Activated naive CD4-positive, alpha-beta T cell treated with anti-CD3 and anti-CD28 coated beads, Interleukin-2, amount 10 ng/mL, durations not matched to agents 7 days and 5 days (primary cell): ENCODE measurements at regions of chr1 and their contacts with region 1.

Region 1: GRCh38 chr1:8848663-8849386 is 29.7 kb downstream of the ENO1 start:
- DNase-seq: peak; percentile 81
- H3K4me3 Mint-ChIP-seq: no peak overlapping the region
- H3K27ac Mint-ChIP-seq: no peak overlapping the region
- H3K4me1 Mint-ChIP-seq: peaks cover 9% of the 10 kb centered on the region
- H3K27me3 Mint-ChIP-seq: peaks cover 26% of the 10 kb centered on the region

Region 2: GRCh38 chr1:8560611-8561544 is 287.9 kb before region 1 on chr1:
- CTCF ChIA-PET with region 1: interaction called, 46 read pairs
- DNase-seq: peak; percentile 44
- H3K4me3 Mint-ChIP-seq: no peak overlapping the region
- H3K27ac Mint-ChIP-seq: no peak overlapping the region
- H3K4me1 Mint-ChIP-seq: peaks cover 26% of the 10 kb centered on the region
- H3K27me3 Mint-ChIP-seq: no peaks in the 10 kb centered on the region

Region 3: GRCh38 chr1:8727809-8728213 is 121.0 kb before region 1 on chr1:
- CTCF ChIA-PET with region 1: interaction called, 24 read pairs
- DNase-seq: no peak
- H3K4me3 Mint-ChIP-seq: no peak overlapping the region
- H3K27ac Mint-ChIP-seq: no peak overlapping the region
- H3K4me1 Mint-ChIP-seq: peaks cover 20% of the 10 kb centered on the region
- H3K27me3 Mint-ChIP-seq: no peaks in the 10 kb centered on the region

Region 4: GRCh38 chr1:8807004-8807403 is 41.8 kb before region 1 on chr1:
- CTCF ChIA-PET with region 1: interaction called, 10 read pairs
- DNase-seq: no peak
- H3K4me3 Mint-ChIP-seq: no peak overlapping the region
- H3K27ac Mint-ChIP-seq: no peak overlapping the region
- H3K4me1 Mint-ChIP-seq: no peaks in the 10 kb centered on the region
- H3K27me3 Mint-ChIP-seq: no peaks in the 10 kb centered on the region

Region 5: GRCh38 chr1:8858888-8859706 is 10.3 kb after region 1 on chr1:
- CTCF ChIA-PET with region 1: interaction called, 37 read pairs
- DNase-seq: peak; percentile 67
- H3K4me3 Mint-ChIP-seq: no peak overlapping the region
- H3K27ac Mint-ChIP-seq: peak overlapping the region; percentile 78
- H3K4me1 Mint-ChIP-seq: peaks cover 52% of the 10 kb centered on the region
- H3K27me3 Mint-ChIP-seq: no peaks in the 10 kb centered on the region

Region 6: GRCh38 chr1:8891401-8891800 is 42.6 kb after region 1 on chr1:
- CTCF ChIA-PET with region 1: no interaction called
- DNase-seq: no peak
- H3K4me3 Mint-ChIP-seq: no peak overlapping the region
- H3K27ac Mint-ChIP-seq: no peak overlapping the region
- H3K4me1 Mint-ChIP-seq: peaks cover 8% of the 10 kb centered on the region
- H3K27me3 Mint-ChIP-seq: no peaks in the 10 kb centered on the region

Region 7: GRCh38 chr1:8925406-8925805 is 76.6 kb after region 1 on chr1:
- CTCF ChIA-PET with region 1: no interaction called
- DNase-seq: no peak
- H3K4me3 Mint-ChIP-seq: no peak overlapping the region
- H3K27ac Mint-ChIP-seq: no peak overlapping the region
- H3K4me1 Mint-ChIP-seq: peaks cover 43% of the 10 kb centered on the region
- H3K27me3 Mint-ChIP-seq: no peaks in the 10 kb centered on the region